Astrocyte of the spinal cord (primary cell): ENCODE measurements at regions of chr10 and their contacts with region 1.

Region 1: DNA sequence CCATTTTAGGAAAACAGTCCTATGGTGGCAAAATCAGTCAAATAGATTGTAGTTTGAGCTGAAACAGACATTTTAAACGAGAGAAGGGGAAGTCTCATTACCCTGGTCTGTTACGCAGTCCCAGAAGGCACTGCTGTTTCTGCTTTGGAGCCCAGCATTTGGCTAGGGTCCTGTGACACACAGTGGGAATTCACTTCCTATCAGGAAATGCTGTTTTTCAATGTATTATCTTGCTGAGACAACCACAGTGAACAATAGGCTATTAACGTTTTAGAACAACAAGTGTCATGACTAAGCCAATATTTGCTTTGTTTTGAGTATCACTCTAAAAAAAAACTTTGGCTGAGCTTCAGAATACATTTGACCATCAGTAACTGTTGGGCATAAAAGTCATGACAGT is 74.1 kb downstream of the ADD3 start:
- DNase-seq: peak; percentile 61
- H3K4me3 ChIP-seq: no peak overlapping the region
- CTCF ChIP-seq: no peak

Region 2: GRCh38 chr10:110007701-110008517 is 74.0 kb before region 1 on chr10 and contains the start of gene ADD3:
- in situ Hi-C with region 1: loop called (anchors 5 kb)
- DNase-seq: peak; percentile 96
- H3K4me3 ChIP-seq: peak within 1 kb of the TSS; percentile 77
- CTCF ChIP-seq: no peak

Region 3: DNA sequence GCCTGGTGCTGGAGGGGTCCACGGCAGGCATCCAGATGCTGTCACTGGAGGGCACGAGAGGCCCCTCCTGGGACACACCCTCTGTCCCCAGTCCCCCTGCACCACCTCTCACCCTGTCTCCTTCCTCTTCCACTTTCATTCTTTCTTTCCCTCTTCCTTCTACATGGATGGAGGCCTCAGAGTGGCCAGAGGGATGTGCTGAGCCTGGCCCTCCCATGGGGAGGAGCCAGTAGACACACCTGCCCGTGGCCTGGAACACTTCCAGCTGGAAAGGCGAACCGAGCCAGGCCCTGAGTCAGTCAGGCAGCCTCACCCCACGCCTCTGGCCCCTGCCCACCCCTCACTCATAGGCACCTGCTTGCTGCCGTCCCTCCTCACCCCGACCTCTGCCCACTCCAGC is 69.6 kb after region 1 on chr10:
- in situ Hi-C with region 1: no loop called
- DNase-seq: no peak
- H3K4me3 ChIP-seq: no peak overlapping the region
- CTCF ChIP-seq: no peak